ENCODE measurements at regions of chr14 and their contacts with region 1.

Region 1: DNA sequence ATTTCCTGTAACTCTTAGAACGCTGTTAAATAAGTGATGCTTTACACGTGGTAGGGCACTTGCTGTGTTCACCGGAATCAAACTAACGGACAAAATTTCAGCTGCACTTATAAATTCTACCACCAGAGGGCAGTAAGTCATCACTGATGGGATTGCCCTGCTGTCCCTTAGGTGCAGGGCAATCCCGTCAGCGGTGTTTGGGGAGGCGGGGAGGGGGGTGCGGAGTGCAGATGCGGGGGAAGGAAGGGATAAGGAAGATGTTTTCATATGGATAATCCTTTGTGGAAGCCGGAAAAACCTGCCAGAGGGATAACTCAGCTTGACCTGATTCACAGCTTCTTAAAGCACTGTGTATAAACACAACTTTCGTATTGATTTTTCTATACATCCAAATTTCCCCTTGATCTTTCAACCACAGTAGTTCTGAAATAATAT is 21.7 kb upstream of the SLC10A1 start:
- DNase-seq: peak; percentile 76
- H3K4me3 ChIP-seq: peak overlapping the region in 1 of 2 experiments; percentile 16; a peak in 1 of 4 replicates
- H3K27ac ChIP-seq: no peak overlapping the region
- H3K4me1 ChIP-seq: no peaks in the 10 kb centered on the region
- H3K27me3 ChIP-seq: peaks cover 9% of the 10 kb centered on the region; the same call in 1 of the 2 replicates
- CTCF ChIP-seq: peak; percentile 93
- EP300 ChIP-seq: no peak
- RAD21 ChIP-seq: peak; percentile 97

Region 2: DNA sequence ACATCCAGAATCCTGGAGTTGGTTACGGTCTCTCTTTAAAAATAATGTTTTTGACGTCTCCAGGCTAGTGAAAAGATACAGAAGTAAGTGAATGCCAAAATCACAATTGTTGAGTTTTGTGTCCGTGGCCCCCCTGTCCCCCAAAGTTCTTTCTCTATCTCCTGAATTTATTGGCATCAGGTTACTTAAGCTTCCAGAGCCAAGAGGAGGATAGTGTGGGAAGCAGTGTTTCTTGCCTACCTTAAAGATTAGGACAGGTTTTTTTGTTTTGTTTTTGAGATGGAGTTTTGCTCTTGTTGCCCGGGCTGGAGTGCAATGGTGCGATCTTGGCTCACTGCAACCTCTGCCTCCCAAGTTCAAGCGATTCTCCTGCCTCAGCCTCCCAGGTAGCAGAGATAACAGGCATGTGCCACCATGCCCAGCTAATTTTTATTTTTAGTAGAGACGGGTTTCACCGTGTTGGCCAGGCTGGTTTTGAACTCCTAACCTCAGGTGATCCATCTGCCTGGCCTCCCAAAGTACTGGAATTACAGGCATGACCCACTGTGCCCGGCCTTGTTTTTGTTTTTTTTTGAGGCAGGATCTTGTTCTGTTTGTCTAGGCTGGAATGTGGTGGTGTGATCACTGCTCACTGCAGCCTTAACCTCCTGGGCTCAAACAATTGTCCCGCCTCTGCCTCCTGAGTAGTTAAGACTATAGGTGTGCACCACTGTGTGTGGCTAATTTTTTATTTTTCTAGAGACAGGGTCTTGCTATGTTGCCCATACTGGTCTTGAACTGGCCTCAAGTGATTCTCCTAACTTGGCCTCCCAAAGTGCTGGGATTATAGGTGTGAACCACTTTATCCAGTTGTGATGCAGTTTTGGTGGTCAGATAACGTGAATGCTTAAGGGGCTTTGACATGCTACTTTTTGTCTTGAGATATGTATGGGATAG is 46.4 kb before region 1 on chr14:
- CTCF ChIA-PET with region 1: no interaction called
- POLR2A ChIA-PET with region 1: no interaction called
- DNase-seq: no peak
- H3K4me3 ChIP-seq: no peak overlapping the region
- H3K27ac ChIP-seq: no peak overlapping the region
- H3K4me1 ChIP-seq: peaks cover 7 to 19% of the 10 kb centered on the region in 2 experiments; a peak in 3 of 4 replicates
- H3K27me3 ChIP-seq: no peaks in the 10 kb centered on the region
- CTCF ChIP-seq: no peak
- EP300 ChIP-seq: no peak
- RAD21 ChIP-seq: no peak

Region 3: GRCh38 chr14:69803753-69804152 is 15.0 kb before region 1 on chr14:
- CTCF ChIA-PET with region 1: interaction called, 19 read pairs
- POLR2A ChIA-PET with region 1: no interaction called
- DNase-seq: no peak
- H3K4me3 ChIP-seq: no peak overlapping the region
- H3K27ac ChIP-seq: no peak overlapping the region
- H3K4me1 ChIP-seq: no peaks in the 10 kb centered on the region
- H3K27me3 ChIP-seq: no peaks in the 10 kb centered on the region
- CTCF ChIP-seq: peak; percentile 23; the same call in 1 of the 2 replicates
- EP300 ChIP-seq: no peak
- RAD21 ChIP-seq: no peak

Region 4: DNA sequence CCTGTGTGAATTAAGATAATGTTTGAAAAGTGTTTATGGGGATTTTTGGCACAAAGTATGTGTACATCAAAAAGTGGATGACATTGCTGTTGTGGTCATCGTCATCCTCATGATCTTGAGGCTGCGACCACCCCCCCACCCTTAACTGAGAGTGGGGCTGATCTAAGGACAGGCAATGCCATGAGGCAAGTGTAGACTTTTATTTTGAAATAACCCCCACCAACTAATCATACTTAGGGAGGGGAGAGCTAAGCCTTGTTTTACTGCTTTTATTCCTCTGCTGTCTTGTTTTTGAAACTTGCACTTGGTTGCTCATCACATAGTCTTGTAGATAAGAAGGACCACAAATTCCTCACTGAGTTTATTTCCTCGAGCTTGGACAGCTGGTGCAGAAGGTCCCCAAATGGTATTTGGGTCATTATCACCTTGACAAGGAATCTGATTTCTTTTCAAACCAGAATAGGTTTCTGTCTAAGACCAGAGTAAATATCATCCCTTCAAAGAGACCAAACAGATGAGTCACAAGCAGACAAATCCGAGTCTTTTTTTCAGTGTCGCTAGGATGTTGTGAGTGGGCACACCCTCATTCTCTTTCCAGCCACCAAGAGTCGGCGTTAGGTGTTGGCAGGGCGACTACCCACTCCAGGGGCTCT is 36.5 kb after region 1 on chr14:
- CTCF ChIA-PET with region 1: no interaction called
- POLR2A ChIA-PET with region 1: no interaction called
- DNase-seq: no peak
- H3K4me3 ChIP-seq: no peak overlapping the region
- H3K27ac ChIP-seq: no peak overlapping the region
- H3K4me1 ChIP-seq: no peaks in the 10 kb centered on the region; a peak in 1 of 4 replicates
- H3K27me3 ChIP-seq: no peaks in the 10 kb centered on the region
- CTCF ChIP-seq: no peak
- EP300 ChIP-seq: no peak
- RAD21 ChIP-seq: no peak

Region 5: GRCh38 chr14:69879175-69880043 is 60.6 kb after region 1 on chr14 and contains the start of gene SMOC1:
- CTCF ChIA-PET with region 1: interaction called, 26 read pairs
- POLR2A ChIA-PET with region 1: no interaction called
- DNase-seq: peak; percentile 87
- H3K4me3 ChIP-seq: peak within 1 kb of the TSS in 1 of 2 experiments; percentile 50; a peak in 2 of 4 replicates
- H3K27ac ChIP-seq: peak within 1 kb of the TSS in 1 of 2 experiments; percentile 43; a peak in 1 of 4 replicates
- H3K4me1 ChIP-seq: peaks cover 0 to 28% of the 10 kb centered on the region in 2 experiments; a peak in 1 of 4 replicates
- H3K27me3 ChIP-seq: 0 out of 2 replicates have a peak, but pooled peaks cover 13% of the 10 kb centered on the region
- CTCF ChIP-seq: no peak
- EP300 ChIP-seq: no peak
- RAD21 ChIP-seq: no peak
- polyA plus RNA-seq, gene SMOC1: not detected in 2 replicates

Region 6: DNA sequence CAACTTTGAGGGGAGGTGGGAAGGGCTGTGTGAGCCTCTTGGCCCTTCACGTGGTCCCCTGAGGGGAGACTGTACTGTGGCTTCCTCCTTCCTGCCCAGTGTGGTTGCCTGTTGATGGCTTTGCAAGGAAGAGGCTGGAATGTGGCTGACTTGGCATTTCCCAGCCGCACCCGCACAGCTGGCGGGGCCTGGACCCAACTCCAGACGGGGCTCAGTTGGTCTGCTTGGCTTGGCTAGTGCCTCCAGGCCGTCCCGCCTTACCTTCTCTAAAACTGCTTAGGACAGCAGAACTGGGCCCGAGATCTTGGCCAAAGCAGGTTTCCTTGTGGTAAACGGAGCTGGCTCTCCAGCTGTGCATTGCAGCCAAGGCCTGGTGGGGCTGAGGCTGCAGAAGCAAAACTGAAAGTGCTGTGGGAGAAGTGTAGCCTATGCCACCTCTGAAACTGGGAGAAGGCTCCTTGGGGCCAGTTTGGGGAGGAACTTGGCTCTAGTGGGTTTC is 200.0 kb after region 1 on chr14:
- CTCF ChIA-PET with region 1: interaction called, 38 read pairs
- POLR2A ChIA-PET with region 1: no interaction called
- DNase-seq: no peak
- H3K4me3 ChIP-seq: no peak overlapping the region
- H3K27ac ChIP-seq: no peak overlapping the region
- H3K4me1 ChIP-seq: no peaks in the 10 kb centered on the region
- H3K27me3 ChIP-seq: no peaks in the 10 kb centered on the region; the same call in 1 of the 2 replicates
- CTCF ChIP-seq: no peak
- EP300 ChIP-seq: no peak
- RAD21 ChIP-seq: no peak

Region 7: DNA sequence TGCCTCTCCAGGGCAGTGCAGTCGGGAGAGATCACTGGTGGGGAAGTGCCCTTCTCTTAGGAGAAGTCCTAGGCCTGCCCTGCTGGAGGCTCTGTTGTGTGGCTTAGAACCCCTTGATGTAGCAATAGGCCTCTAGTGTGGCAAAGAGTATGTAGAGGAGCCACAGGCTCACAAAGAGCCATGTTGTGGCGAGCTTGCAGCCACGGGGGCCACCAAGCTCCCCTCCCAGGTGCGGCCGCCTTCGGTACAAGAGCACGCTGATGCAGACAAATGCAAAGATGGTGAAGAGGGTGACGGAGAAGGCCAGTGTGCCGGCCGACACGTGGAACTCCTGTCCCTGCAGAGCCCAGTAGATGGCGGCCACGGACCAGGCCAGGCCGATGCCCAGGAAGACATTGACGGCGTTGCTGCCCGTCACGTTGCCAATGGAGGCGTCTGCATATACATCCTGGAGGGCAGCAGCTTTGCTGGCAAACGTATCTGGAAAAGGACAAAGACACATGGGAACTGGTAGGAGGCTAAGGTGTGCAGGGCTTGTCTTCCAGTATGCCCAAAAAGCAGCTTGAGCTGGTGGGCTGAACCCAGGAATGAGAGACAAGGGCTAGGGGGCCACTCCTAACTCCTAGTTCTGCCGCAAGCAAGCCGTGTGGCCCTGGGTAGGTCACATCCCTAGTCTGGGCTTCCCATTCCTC is 227.2 kb after region 1 on chr14:
- CTCF ChIA-PET with region 1: interaction called, 20 read pairs
- POLR2A ChIA-PET with region 1: no interaction called
- DNase-seq: peak; percentile 82
- H3K4me3 ChIP-seq: peak overlapping the region in 1 of 2 experiments; percentile 39; a peak in 1 of 4 replicates
- H3K27ac ChIP-seq: peak overlapping the region in 1 of 2 experiments; percentile 40; a peak in 2 of 4 replicates
- H3K4me1 ChIP-seq: peaks cover 0 to 18% of the 10 kb centered on the region in 2 experiments; a peak in 1 of 4 replicates
- H3K27me3 ChIP-seq: no peaks in the 10 kb centered on the region
- CTCF ChIP-seq: peak; percentile 47
- EP300 ChIP-seq: no peak
- RAD21 ChIP-seq: peak; percentile 96

Measured in SK-N-SH (cell line).